Activated naive CD4-positive, alpha-beta T cell treated with anti-CD3 and anti-CD28 coated beads for 36 hours (primary cell): ENCODE measurements at regions of chr4 and their contacts with region 1.

Region 1: GRCh38 chr4:101328063-101328602 is 19.2 kb downstream of the PPP3CA start:
- DNase-seq: peak; percentile 52
- H3K4me3 Mint-ChIP-seq: no peak overlapping the region
- H3K27ac Mint-ChIP-seq: peak overlapping the region; percentile 73
- H3K4me1 Mint-ChIP-seq: peaks cover 28% of the 10 kb centered on the region
- H3K27me3 Mint-ChIP-seq: peaks cover 25% of the 10 kb centered on the region

Region 2: GRCh38 chr4:101037938-101038413 is 290.2 kb before region 1 on chr4:
- CTCF ChIA-PET with region 1: no interaction called
- intact Hi-C with region 1: loop called (anchors 1 kb)
- DNase-seq: no peak
- H3K4me3 Mint-ChIP-seq: no peak overlapping the region
- H3K27ac Mint-ChIP-seq: no peak overlapping the region
- H3K4me1 Mint-ChIP-seq: peaks cover 13% of the 10 kb centered on the region
- H3K27me3 Mint-ChIP-seq: no peaks in the 10 kb centered on the region

Region 3: DNA sequence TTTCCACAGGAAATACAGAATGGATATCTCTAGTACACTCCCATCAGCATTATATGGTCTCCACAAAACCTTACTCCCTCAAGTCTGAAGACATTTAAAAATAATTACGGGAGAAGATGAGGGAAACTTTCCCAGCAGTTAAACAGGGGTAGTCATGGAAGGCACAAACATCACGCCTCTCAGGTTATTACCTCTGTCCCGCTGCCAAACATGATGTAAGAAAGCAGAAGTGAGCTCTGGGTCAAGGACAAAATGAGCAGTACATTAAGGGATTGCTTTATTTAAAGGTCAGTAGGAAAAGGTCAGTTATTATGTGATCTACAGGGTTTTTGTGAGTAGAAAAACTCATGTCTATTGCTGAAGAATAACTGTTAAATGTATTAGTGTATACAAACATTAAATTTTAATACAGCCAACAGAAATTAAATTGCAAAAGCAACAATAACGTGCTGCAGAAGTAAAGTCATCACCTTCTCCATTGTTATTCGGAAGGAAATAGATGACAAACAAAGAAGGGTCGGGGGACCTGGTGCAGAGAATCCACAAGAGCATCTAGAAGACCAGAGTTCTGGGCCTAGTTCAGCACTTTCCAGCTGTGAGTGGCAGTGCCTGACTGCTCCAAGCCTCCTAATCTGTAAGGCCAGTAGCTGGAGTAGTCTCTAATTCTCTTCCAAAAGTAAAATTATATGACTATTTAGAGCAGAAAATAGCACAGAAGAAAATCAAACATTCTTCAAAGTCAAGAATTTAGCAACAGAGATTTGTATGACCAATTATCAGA is 152.0 kb before region 1 on chr4:
- CTCF ChIA-PET with region 1: no interaction called
- intact Hi-C with region 1: no loop called
- DNase-seq: no peak
- H3K4me3 Mint-ChIP-seq: no peak overlapping the region
- H3K27ac Mint-ChIP-seq: no peak overlapping the region
- H3K4me1 Mint-ChIP-seq: peaks cover 16% of the 10 kb centered on the region
- H3K27me3 Mint-ChIP-seq: no peaks in the 10 kb centered on the region

Region 4: DNA sequence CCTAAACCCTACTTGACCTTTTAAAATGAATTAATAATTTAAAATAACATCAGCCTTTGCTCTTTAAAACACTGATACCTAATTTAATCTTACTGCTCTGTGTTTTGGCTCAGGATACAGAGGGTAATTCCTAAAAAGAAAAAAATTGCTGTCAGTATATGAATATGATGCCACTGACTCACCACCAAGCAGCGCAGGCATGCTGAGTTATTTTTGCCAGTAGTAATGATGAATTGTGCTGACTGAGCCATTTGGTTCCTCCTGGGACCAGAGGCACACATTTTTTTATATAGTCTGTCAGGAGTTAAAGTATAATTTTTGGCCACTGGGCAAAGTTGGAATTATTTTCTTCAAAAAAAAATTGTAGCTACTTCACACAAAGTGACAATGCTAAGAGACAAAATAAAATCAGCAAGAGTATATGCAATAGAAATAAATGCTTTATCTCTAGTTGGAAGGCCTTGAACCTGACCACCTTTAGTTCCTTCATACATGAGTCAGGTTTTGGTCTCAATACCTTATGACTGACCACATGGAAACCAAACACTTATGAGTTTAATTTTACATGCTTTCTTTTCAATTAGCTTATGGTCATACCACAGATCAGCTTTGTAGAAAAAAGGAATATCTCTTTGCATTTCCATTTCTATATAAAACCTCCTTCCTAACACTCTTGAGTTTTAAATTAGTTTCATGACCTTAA is 95.9 kb before region 1 on chr4:
- CTCF ChIA-PET with region 1: no interaction called
- intact Hi-C with region 1: no loop called
- DNase-seq: peak; percentile 65
- H3K4me3 Mint-ChIP-seq: no peak overlapping the region
- H3K27ac Mint-ChIP-seq: no peak overlapping the region
- H3K4me1 Mint-ChIP-seq: peaks cover 20% of the 10 kb centered on the region
- H3K27me3 Mint-ChIP-seq: no peaks in the 10 kb centered on the region

Region 5: DNA sequence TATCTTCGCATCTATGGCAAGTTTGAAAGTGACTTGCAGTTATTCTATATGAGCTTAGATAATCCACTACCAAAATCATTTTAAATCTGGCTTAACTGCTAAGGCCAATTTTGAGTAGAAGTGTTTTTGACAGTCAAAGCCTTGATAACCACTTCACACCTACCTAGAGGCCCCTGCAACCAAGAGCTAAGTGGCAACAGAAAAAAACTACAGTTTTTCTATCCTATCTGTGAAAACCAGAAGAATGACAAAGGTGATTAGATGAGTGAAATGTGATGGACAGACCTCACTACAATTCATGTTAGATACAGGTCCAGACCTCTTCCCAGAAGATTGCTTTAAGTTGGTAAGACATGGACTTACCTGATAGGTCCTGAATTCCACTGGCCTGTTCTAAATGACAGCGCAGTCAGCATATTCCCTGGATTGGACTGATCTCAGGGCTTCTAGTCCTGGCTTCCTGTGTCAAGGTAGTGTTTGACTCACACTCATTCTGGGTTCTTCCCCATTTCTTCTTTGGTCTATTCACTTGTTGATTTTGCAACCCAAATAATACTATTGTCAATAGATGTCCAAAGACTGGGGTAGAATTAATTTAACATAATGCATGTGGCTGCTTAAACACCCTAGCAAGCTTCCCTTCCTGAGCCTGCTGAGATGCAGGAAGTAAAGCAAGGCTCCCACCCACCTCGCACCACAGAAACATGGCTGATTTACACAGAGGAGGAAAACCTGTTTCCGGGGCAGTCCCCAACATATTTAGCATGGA is 45.9 kb before region 1 on chr4:
- CTCF ChIA-PET with region 1: no interaction called
- intact Hi-C with region 1: loop called (anchors 1 kb)
- DNase-seq: peak; percentile 72
- H3K4me3 Mint-ChIP-seq: no peak overlapping the region
- H3K27ac Mint-ChIP-seq: no peak overlapping the region
- H3K4me1 Mint-ChIP-seq: peaks cover 42% of the 10 kb centered on the region
- H3K27me3 Mint-ChIP-seq: no peaks in the 10 kb centered on the region

Region 6: DNA sequence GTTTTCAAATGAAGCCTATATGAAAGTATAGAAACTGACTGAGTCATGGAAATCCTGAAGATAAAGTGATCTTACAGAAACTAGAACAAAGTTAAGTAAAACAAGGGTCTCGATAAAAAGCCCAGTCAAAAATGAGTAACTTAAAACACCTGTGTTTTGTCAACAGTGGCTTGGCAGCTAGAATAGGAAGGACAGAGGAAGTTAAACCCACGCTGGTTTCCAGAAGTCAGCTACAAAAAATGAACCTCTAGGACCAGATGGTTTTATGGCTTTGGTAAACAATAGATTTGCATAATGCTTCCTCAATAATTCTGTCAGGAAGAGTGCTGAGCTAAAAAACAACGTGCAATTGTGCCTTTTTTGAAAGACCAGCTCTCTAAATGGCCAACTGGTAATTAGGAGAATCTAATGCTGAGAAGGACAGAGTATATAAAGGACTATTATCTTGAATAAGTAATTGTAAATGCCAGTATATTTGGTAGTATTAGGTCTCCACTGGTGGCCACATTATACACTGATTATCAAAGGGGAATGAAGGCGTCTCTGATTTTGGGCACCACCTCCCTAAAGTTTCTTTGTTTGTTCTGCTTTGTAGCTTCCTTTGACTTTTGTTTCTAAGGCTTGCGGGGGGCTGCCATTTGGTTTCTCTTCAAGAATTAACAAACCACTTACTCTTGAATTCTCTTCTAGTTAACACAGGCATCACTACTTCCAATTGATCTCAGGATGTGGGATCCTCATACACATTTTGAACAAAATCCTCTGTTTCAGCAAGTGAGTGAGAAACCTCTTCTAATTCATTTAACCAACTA is 91.4 kb after region 1 on chr4:
- CTCF ChIA-PET with region 1: no interaction called
- intact Hi-C with region 1: loop called (anchors 1 kb)
- DNase-seq: no peak
- H3K4me3 Mint-ChIP-seq: no peak overlapping the region
- H3K27ac Mint-ChIP-seq: no peak overlapping the region
- H3K4me1 Mint-ChIP-seq: peaks cover 36% of the 10 kb centered on the region
- H3K27me3 Mint-ChIP-seq: peaks cover 43% of the 10 kb centered on the region

Region 7: DNA sequence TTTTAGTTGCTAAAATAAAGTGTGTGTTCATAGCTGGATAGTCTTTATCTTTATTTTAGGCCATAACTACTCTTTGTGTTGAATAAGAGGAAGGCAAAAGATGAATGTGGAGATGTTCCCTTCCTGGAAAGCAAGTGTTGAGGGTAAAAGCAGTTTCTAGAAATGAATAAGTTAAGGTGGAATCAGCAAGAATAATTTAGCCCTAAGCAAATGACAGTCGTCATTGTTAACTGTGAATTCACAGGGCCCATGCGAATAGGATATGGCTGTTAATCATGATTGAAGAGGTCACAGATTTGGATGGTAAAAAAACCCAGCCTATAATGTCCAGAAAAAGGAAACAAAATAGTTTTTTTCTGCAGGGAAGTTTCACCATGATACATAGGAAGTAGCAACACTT is 187.0 kb after region 1 on chr4:
- CTCF ChIA-PET with region 1: no interaction called
- intact Hi-C with region 1: no loop called
- DNase-seq: no peak
- H3K4me3 Mint-ChIP-seq: no peak overlapping the region
- H3K27ac Mint-ChIP-seq: no peak overlapping the region
- H3K4me1 Mint-ChIP-seq: peaks cover 2% of the 10 kb centered on the region
- H3K27me3 Mint-ChIP-seq: peaks cover 25% of the 10 kb centered on the region

Region 8: GRCh38 chr4:101853028-101853427 is 524.9 kb after region 1 on chr4:
- CTCF ChIA-PET with region 1: no interaction called
- intact Hi-C with region 1: no loop called
- DNase-seq: no peak
- H3K4me3 Mint-ChIP-seq: no peak overlapping the region
- H3K27ac Mint-ChIP-seq: no peak overlapping the region
- H3K4me1 Mint-ChIP-seq: no peaks in the 10 kb centered on the region
- H3K27me3 Mint-ChIP-seq: peaks cover 5% of the 10 kb centered on the region

Region 9: DNA sequence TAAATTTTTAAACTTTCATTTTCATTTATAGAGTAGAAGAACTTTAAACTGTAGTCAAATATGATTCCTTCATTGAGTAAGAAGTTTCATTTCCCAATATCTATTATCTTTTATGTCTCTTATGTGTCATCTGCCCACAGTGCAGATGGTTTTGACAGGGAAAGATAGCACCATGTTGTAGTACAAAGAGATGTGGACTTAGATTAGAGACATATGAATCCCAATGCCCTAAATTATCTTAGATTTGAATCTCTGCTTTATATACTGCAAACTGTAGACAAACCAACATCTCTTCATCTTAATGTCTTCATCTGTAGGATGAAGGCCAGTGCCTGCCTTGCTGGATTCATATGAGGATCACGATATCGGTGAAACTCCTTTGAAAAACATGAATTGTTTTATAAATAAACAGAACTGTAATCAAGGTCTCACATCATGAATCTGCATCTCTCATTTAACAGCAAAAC is 679.9 kb after region 1 on chr4:
- CTCF ChIA-PET with region 1: no interaction called
- intact Hi-C with region 1: loop called (anchors 5 kb)
- DNase-seq: peak; percentile 26
- H3K4me3 Mint-ChIP-seq: no peak overlapping the region
- H3K27ac Mint-ChIP-seq: no peak overlapping the region
- H3K4me1 Mint-ChIP-seq: peaks cover 7% of the 10 kb centered on the region
- H3K27me3 Mint-ChIP-seq: no peaks in the 10 kb centered on the region